ENCODE measurements at regions of chr2 and their contacts with region 1.

Region 1: GRCh38 chr2:201171259-201171814 is 11.6 kb upstream of the CASP10 start:
- DNase-seq: no peak
- H3K4me3 ChIP-seq: no peak overlapping the region
- H3K27ac ChIP-seq: no peak overlapping the region
- H3K4me1 ChIP-seq: peaks cover 0 to 7% (median 3%) of the 10 kb centered on the region in 4 donors
- H3K27me3 ChIP-seq: no peaks in the 10 kb centered on the region
- CTCF ChIP-seq: no peak
- EP300 ChIP-seq: no peak
- POLR2A ChIP-seq: no peak

Region 2: DNA sequence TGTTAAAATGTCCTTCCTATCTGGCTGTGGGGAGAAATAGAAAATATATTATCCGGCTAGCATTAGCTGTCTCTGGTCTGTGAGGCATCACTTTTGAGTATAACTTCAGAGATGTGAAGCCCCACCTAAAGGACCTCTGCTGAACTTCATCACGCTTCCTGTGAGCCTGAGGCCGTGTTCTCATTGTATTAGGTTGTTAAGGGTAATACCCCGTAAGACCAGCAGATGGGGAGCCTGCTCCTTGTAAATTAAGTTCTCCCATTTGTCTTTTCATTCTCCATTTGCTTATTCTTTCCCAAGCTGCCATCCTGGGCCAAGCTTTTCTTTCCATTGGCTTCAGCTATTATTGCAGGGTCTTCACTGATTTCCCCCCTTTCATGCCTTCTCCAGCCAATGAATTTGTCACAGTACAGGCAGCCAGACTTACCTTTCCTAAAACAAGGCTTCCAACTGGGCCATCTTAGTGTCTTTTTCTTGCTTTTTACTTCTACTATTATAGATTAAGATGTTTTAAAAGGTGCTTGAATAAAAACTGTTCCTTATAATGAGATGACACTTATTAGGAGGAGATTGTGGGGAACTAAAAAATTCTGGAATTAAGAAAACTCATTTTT is 269.8 kb before region 1 on chr2:
- intact Hi-C with region 1: loop called (anchors 5 kb)
- DNase-seq: no peak
- H3K4me3 ChIP-seq: no peak overlapping the region
- H3K27ac ChIP-seq: no peak overlapping the region
- H3K4me1 ChIP-seq: peaks cover 0 to 3% (median 0%) of the 10 kb centered on the region in 4 donors
- H3K27me3 ChIP-seq: no peaks in the 10 kb centered on the region
- CTCF ChIP-seq: peak; percentile 55 to 77 (median 75)
- EP300 ChIP-seq: no peak
- POLR2A ChIP-seq: no peak